Dendritic cell treated with granulocyte-macrophage colony-stimulating factor and Interleukin-4, amounts not matched to agents 40 ng/mL and 50 ng/mL, for 4 days (primary cell): ENCODE measurements at regions of chr13 and their contacts with region 1.

Region 1: GRCh38 chr13:104773775-104774174 is 1707.6 kb upstream of the SLC10A2 start:
- H3K4me3 Mint-ChIP-seq: no peak overlapping the region
- H3K27ac Mint-ChIP-seq: no peak overlapping the region
- H3K4me1 Mint-ChIP-seq: no peaks in the 10 kb centered on the region
- H3K27me3 Mint-ChIP-seq: no peaks in the 10 kb centered on the region

Region 2: GRCh38 chr13:104567114-104567513 is 206.7 kb before region 1 on chr13:
- intact Hi-C with region 1: no loop called
- H3K4me3 Mint-ChIP-seq: no peak overlapping the region
- H3K27ac Mint-ChIP-seq: no peak overlapping the region
- H3K4me1 Mint-ChIP-seq: no peaks in the 10 kb centered on the region
- H3K27me3 Mint-ChIP-seq: no peaks in the 10 kb centered on the region

Region 3: DNA sequence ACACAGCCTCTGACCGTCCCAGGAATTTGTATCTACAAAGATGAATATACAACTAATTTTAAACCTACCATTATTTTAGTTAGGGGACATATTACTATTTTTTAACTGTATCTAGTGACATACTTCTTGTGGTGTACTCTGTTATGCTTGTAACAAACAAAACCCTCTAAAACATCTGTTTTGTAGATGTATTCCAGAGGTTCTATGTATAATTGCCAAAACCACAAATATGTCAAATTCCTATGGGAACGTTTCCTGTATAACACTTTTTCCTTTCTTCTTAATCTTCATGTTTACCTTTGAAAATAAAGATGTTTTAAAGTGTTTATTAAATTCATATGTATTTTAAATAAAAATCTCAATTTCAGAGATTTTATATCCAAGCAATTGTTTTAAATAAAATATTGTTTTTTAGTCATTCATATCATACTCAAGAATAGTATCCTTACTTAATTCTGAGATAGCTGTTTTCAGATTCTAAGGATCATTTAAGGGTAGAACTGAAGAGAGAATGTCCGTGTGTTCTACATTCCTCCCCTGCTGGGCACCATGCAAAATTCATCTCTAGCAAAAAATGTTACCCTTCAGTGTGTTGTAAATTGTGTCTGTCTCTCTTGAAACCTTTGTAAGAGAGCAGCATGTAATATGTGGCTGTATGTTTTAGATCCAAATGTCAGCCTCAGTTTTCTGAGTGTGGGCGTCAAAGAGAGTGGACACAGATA is 434.0 kb after region 1 on chr13:
- intact Hi-C with region 1: loop called (anchors 5 kb)
- H3K4me3 Mint-ChIP-seq: no peak overlapping the region
- H3K27ac Mint-ChIP-seq: no peak overlapping the region
- H3K4me1 Mint-ChIP-seq: no peaks in the 10 kb centered on the region
- H3K27me3 Mint-ChIP-seq: no peaks in the 10 kb centered on the region